Naive thymus-derived CD4-positive, alpha-beta T cell (primary cell): ENCODE measurements at regions of chr4 and their contacts with region 1.

Region 1: GRCh38 chr4:165493359-165493758 is 114.6 kb downstream of the CPE start:
- DNase-seq: peak; percentile 30 to 66 (median 58)
- ATAC-seq: peak; percentile 85
- H3K4me3 ChIP-seq: no peak overlapping the region
- H3K4me3 Mint-ChIP-seq: peak overlapping the region in 9 of 10 donors; percentile 56 to 84 (median 68)
- H3K27ac ChIP-seq: no peak overlapping the region
- H3K27ac Mint-ChIP-seq: no peak overlapping the region
- H3K4me1 ChIP-seq: no peaks in the 10 kb centered on the region
- H3K4me1 Mint-ChIP-seq: peaks cover 3 to 8% (median 4%) of the 10 kb centered on the region in 7 donors
- H3K27me3 ChIP-seq: peaks cover 0 to 3% of the 10 kb centered on the region in 2 donors
- H3K27me3 Mint-ChIP-seq: peaks cover 20 to 36% (median 26%) of the 10 kb centered on the region in 5 donors

Region 2: DNA sequence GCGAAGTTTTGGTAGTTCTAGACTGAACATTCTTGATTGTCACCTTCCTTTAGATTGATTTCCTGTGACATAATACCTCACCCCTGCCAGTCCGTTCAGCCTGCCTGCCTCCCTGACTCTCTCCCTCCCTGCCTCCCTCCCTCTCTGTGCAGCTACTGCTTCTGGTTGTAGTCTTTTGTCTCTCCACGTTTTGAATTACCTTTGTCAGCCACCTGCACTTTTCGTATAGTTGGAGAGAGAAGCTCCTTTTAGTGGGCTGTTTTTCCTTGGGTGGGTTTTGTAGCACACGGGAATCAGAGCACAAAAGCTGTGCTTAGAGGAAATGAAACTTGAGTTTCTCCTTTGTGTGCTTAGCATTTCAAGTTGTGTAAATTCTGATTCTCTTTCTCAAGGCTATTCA is 198.5 kb before region 1 on chr4:
- CTCF ChIA-PET with region 1: no interaction called
- POLR2A ChIA-PET with region 1: no interaction called
- intact Hi-C with region 1: no loop called
- DNase-seq: peak in 7 of 9 donors; percentile 16 to 56 (median 51)
- ATAC-seq: peak; percentile 87
- H3K4me3 ChIP-seq: no peak overlapping the region
- H3K4me3 Mint-ChIP-seq: peak overlapping the region; percentile 45 to 80 (median 74)
- H3K27ac ChIP-seq: peak overlapping the region; percentile 49
- H3K27ac Mint-ChIP-seq: peak overlapping the region; percentile 16 to 91 (median 74)
- H3K4me1 ChIP-seq: peaks cover 0 to 15% of the 10 kb centered on the region in 2 donors
- H3K4me1 Mint-ChIP-seq: peaks cover 22 to 42% (median 28%) of the 10 kb centered on the region in 7 donors
- H3K27me3 ChIP-seq: no peaks in the 10 kb centered on the region
- H3K27me3 Mint-ChIP-seq: no peaks in the 10 kb centered on the region

Region 3: DNA sequence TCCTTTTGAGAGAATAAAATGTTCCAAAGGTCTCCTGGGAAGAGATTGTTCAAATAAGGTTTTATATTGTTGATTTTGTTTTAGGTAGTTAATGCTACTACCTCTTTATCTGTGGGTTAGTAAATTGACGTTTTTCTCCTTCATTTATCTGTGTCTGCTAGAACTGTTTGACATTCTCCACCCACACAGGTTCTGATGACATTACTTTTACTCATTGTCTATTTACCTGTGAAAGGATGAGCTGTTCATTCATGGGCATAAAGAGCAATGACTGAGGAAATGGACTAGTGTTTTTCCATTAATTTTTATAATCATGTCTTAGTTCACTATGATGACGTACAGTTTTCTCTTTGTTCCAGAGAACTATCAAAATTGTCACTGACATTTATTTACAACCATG is 38.9 kb before region 1 on chr4:
- CTCF ChIA-PET with region 1: no interaction called
- POLR2A ChIA-PET with region 1: no interaction called
- intact Hi-C with region 1: no loop called
- DNase-seq: no peak
- ATAC-seq: no peak
- H3K4me3 ChIP-seq: no peak overlapping the region
- H3K4me3 Mint-ChIP-seq: no peak overlapping the region
- H3K27ac ChIP-seq: no peak overlapping the region
- H3K27ac Mint-ChIP-seq: no peak overlapping the region
- H3K4me1 ChIP-seq: no peaks in the 10 kb centered on the region
- H3K4me1 Mint-ChIP-seq: peaks cover 0 to 3% (median 0%) of the 10 kb centered on the region in 7 donors
- H3K27me3 ChIP-seq: no peaks in the 10 kb centered on the region
- H3K27me3 Mint-ChIP-seq: peaks cover 0 to 14% (median 6%) of the 10 kb centered on the region in 5 donors

Region 4: DNA sequence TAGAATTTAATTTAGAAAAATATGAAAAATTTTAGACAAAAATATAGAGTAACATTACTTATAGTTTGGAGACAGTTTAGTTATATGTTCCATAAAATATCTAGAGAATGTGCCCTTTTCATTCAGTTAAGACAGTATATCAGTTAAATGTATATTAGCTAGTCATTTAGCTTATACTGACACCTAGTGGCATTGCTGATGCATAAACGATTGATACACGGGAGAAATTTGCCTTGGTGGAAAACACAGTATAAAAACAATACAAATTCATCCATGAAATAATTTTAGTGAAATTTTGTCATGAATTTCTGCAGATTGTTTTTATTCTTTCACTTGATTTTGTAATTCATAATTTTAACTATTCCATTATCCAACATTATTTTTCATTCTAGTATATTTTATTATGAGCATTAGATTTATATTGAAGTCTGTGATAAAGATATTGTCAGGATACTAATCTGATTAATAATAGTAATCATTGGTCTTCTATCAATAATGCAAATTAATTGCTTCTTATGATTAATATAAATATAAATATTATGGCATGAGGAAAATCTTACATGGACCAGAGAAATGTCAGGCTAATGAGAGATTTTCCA is 598.7 kb after region 1 on chr4:
- CTCF ChIA-PET with region 1: interaction called, 4 read pairs
- POLR2A ChIA-PET with region 1: no interaction called
- intact Hi-C with region 1: loop called in 1 of 2 experiments (anchors 1 kb)
- DNase-seq: peak in 3 of 9 donors; percentile 1 to 11 (median 3)
- ATAC-seq: no peak
- H3K4me3 ChIP-seq: no peak overlapping the region
- H3K4me3 Mint-ChIP-seq: no peak overlapping the region
- H3K27ac ChIP-seq: no peak overlapping the region
- H3K27ac Mint-ChIP-seq: no peak overlapping the region
- H3K4me1 ChIP-seq: no peaks in the 10 kb centered on the region
- H3K4me1 Mint-ChIP-seq: no peaks in the 10 kb centered on the region
- H3K27me3 ChIP-seq: no peaks in the 10 kb centered on the region
- H3K27me3 Mint-ChIP-seq: no peaks in the 10 kb centered on the region